ENCODE measurements at regions of chr21 and their contacts with region 1.

Region 1: DNA sequence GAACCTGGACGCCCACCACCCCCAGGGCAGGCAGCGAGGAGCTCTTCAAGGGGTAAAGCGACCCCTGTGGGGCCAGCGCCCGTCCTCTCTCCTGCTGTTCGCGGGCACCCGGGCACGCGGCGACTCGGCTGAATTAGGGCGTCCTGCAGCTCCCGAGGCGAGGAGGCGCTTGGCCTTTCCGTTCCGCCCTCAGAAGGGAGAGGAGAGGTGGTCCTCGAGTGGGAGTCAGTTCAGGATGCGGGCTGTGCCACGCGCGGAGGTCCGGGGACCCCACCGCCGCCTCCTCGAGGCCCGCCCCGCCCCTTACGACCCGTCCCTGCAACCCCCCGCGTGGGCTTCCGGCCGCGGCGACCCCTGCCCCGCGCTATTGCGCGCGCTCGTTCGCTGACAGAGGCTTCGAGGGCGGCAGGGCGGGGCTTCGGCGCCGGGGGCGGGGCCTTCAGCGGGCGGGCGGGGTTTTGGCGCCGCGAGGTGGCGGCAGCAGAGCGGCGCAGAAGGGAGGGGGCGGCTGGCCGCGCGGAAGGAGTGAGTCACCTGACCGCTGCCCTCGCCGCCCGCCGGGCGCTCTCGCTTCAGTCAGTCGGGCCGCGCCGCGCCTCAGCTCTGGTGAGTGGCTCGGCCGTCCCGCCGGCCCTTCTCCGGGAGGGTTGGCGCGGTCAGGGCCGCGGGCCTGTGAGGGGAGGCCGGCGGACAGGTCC is at the start of gene BACH1:
- DNase-seq: peak; percentile 89
- H3K4me3 ChIP-seq: peak within 1 kb of the TSS; percentile 52 to 90 (median 75)
- H3K27ac ChIP-seq: peak within 1 kb of the TSS; percentile 62
- H3K4me1 ChIP-seq: peaks cover 17% of the 10 kb centered on the region
- H3K27me3 ChIP-seq: no peaks in the 10 kb centered on the region
- CTCF ChIP-seq: peak; percentile 19 to 48
- POLR2A ChIP-seq: peak; percentile 89
- total RNA-seq, gene BACH1: 28.8 and 30.3 TPM in 2 replicates

Region 2: DNA sequence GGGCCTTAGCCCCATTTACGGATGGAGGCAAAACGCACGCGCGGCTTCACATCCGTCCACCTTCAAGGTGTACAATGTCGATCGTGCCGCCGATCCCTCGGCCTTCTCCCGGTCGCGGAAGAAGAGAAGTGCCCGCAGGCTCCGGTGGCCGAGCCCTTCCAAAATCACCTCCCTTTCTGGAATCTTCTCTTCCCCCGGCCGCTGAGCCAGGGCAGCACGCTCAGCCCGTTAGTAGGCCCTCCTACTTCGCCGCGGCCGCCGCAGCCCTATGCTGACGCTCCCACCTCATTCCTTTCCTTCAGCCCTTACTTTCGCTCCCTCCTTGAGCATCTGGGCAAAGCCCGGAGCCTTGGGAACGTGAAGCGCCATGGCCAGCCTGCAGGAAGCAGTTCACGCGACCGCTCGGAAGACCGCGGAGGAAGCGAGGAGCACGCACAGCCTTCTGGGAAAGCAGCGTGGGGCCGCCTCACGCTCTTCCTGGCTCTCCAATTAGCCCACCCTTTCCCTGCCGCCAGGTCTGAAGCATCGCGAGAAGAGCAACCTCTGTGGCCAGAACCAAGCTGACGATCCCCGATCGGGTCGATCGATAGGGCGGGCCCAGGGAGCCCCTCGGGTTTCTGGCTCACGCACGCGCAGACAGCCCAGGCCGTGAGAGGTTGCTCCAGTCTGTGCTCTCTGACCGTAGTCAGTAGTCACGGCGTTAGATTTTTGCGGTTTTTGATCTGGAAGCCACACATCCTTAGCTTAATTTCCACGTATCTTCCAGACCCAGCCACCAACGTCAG is 225.1 kb before region 1 on chr21 and contains the start of gene CCT8:
- CTCF ChIA-PET with region 1: no interaction called
- POLR2A ChIA-PET with region 1: no interaction called
- dilution Hi-C with region 1: no loop called
- intact Hi-C with region 1: loop called (anchors 5 kb)
- DNase-seq: peak; percentile 99
- H3K4me3 ChIP-seq: peak within 1 kb of the TSS; percentile 35 to 100 (median 95)
- H3K27ac ChIP-seq: peak within 1 kb of the TSS; percentile 68
- H3K4me1 ChIP-seq: peaks cover 24% of the 10 kb centered on the region
- H3K27me3 ChIP-seq: no peaks in the 10 kb centered on the region
- CTCF ChIP-seq: no peak
- POLR2A ChIP-seq: peak; percentile 96
- total RNA-seq, gene CCT8: 212 and 213 TPM in 2 replicates

Region 3: GRCh38 chr21:29164325-29164942 is 134.1 kb before region 1 on chr21:
- CTCF ChIA-PET with region 1: interaction called, 53 read pairs
- POLR2A ChIA-PET with region 1: interaction called, 4 read pairs
- dilution Hi-C with region 1: no loop called
- intact Hi-C with region 1: loop called (anchors 1 kb)
- DNase-seq: peak; percentile 74
- H3K4me3 ChIP-seq: no peak overlapping the region
- H3K27ac ChIP-seq: peak overlapping the region; percentile 24
- H3K4me1 ChIP-seq: peaks cover 9% of the 10 kb centered on the region
- H3K27me3 ChIP-seq: no peaks in the 10 kb centered on the region
- CTCF ChIP-seq: peak; percentile 48 to 64
- POLR2A ChIP-seq: no peak

Region 4: GRCh38 chr21:29195981-29196669 is 102.4 kb before region 1 on chr21:
- CTCF ChIA-PET with region 1: interaction called, 3 read pairs
- POLR2A ChIA-PET with region 1: no interaction called
- dilution Hi-C with region 1: no loop called
- intact Hi-C with region 1: loop called (anchors 1 kb)
- DNase-seq: peak; percentile 90
- H3K4me3 ChIP-seq: peak overlapping the region in 2 of 3 experiments; percentile 38 to 44
- H3K27ac ChIP-seq: peak overlapping the region; percentile 92
- H3K4me1 ChIP-seq: peaks cover 32% of the 10 kb centered on the region
- H3K27me3 ChIP-seq: no peaks in the 10 kb centered on the region
- CTCF ChIP-seq: peak; percentile 47 to 56
- POLR2A ChIP-seq: no peak

Region 5: GRCh38 chr21:29287383-29287782 is 11.1 kb before region 1 on chr21:
- CTCF ChIA-PET with region 1: interaction called, 4 read pairs
- POLR2A ChIA-PET with region 1: interaction called, 10 read pairs
- dilution Hi-C with region 1: no loop called
- intact Hi-C with region 1: loop called (anchors 1 kb)
- DNase-seq: peak; percentile 60
- H3K4me3 ChIP-seq: peak overlapping the region in 1 of 3 experiments; percentile 21
- H3K27ac ChIP-seq: no peak overlapping the region
- H3K4me1 ChIP-seq: peaks cover 32% of the 10 kb centered on the region
- H3K27me3 ChIP-seq: peaks cover 3 to 5% of the 10 kb centered on the region in 2 experiments
- CTCF ChIP-seq: no peak
- POLR2A ChIP-seq: no peak

Region 6: GRCh38 chr21:29351691-29352090 is 53.2 kb after region 1 on chr21:
- CTCF ChIA-PET with region 1: interaction called, 27 read pairs
- POLR2A ChIA-PET with region 1: interaction called, 3 read pairs
- dilution Hi-C with region 1: no loop called
- intact Hi-C with region 1: loop called (anchors 1 kb)
- DNase-seq: no peak
- H3K4me3 ChIP-seq: no peak overlapping the region
- H3K27ac ChIP-seq: no peak overlapping the region
- H3K4me1 ChIP-seq: no peaks in the 10 kb centered on the region
- H3K27me3 ChIP-seq: no peaks in the 10 kb centered on the region
- CTCF ChIP-seq: no peak
- POLR2A ChIP-seq: no peak

Region 7: GRCh38 chr21:29979043-29979442 is 680.5 kb after region 1 on chr21:
- CTCF ChIA-PET with region 1: no interaction called
- POLR2A ChIA-PET with region 1: no interaction called
- dilution Hi-C with region 1: no loop called
- intact Hi-C with region 1: no loop called
- DNase-seq: no peak
- H3K4me3 ChIP-seq: no peak overlapping the region
- H3K27ac ChIP-seq: no peak overlapping the region
- H3K4me1 ChIP-seq: no peaks in the 10 kb centered on the region
- H3K27me3 ChIP-seq: no peaks in the 10 kb centered on the region
- CTCF ChIP-seq: no peak
- POLR2A ChIP-seq: no peak

Measured in endothelial cell of umbilical vein (primary cell).